Breast epithelium (tissue), 4 donors: ENCODE measurements at regions of chr13 and their contacts with region 1.

Region 1: DNA sequence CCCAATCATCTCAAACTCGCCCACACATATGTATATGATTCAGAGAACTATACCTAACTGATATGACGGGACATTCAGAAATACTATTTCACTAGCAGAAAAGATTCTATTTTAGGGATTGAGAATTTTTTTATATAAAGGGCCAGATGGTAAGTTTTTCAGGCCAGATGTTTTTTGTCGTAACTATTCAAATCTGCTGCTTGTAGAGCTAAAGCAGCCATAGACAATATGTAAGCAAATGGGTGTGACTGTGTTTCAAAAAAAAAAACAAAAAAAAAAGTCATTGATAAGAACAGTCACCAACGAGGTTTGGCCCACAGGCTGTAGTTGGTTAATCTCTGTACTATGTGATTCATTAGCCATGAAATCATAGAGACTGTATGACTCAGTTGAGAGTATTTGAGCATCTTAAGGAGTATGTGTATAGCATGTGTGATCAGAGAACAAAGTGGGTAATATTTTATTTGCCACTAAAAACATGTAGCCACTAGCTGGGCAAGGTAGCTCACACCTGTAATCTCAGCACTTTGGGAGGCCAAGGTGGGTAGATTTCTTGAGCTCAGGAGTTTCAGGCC is 2724.7 kb downstream of the PCDH9 start:
- DNase-seq: no peak
- H3K4me3 ChIP-seq: no peak overlapping the region
- H3K27ac ChIP-seq: no peak overlapping the region
- H3K4me1 ChIP-seq: no peaks in the 10 kb centered on the region
- H3K27me3 ChIP-seq: no peaks in the 10 kb centered on the region
- CTCF ChIP-seq: no peak
- POLR2A ChIP-seq: no peak

Region 2: GRCh38 chr13:64579331-64579730 is 73.9 kb after region 1 on chr13:
- intact Hi-C with region 1: loop called (anchors 10 kb)
- DNase-seq: no peak
- H3K4me3 ChIP-seq: no peak overlapping the region
- H3K27ac ChIP-seq: no peak overlapping the region
- H3K4me1 ChIP-seq: no peaks in the 10 kb centered on the region
- H3K27me3 ChIP-seq: no peaks in the 10 kb centered on the region
- CTCF ChIP-seq: no peak
- POLR2A ChIP-seq: no peak

Region 3: GRCh38 chr13:66506979-66507378 is 2001.6 kb after region 1 on chr13:
- intact Hi-C with region 1: no loop called
- DNase-seq: no peak
- H3K4me3 ChIP-seq: no peak overlapping the region
- H3K27ac ChIP-seq: no peak overlapping the region
- H3K4me1 ChIP-seq: no peaks in the 10 kb centered on the region
- H3K27me3 ChIP-seq: no peaks in the 10 kb centered on the region
- CTCF ChIP-seq: no peak
- POLR2A ChIP-seq: no peak